ENCODE measurements at regions of chr15 and their contacts with region 1.

Region 1: GRCh38 chr15:100721770-100722550 is 119.6 kb downstream of the ASB7 start:
- DNase-seq: peak; percentile 99
- ATAC-seq: peak; percentile 69
- H3K4me3 ChIP-seq: peak overlapping the region; percentile 38; the same call in 1 of the 2 replicates
- H3K27ac ChIP-seq: peak overlapping the region; percentile 100
- H3K4me1 ChIP-seq: peaks cover 51% of the 10 kb centered on the region
- H3K27me3 ChIP-seq: no peaks in the 10 kb centered on the region
- CTCF ChIP-seq: no peak

Region 2: DNA sequence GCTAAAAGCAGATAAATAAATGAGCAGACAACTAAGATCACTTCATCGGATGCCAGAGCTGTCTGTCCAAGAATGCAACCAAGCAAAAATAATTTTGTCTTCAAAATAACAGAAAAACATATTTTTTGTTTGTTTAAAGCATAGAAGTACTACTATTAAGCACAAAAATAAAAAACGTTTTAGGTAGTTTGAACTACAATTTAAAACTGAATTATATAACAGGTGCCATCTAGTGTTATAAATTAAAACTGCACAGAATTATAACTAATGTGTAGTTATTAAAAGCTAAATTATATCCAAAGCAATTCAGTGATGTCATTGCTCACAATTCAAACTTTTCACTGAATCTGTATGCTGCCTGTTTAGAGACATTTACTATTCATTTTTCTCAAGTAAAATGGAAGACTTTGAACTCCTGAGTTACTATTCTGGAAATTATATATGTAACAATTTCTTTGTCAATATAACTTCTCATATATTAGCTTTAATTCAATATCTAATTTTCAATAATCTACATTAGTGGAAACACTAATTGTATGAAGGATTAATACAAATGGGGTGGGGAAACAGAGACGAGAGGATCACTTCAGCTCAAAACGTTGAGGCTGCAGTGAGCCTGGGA is 149.5 kb before region 1 on chr15:
- CTCF ChIA-PET with region 1: no interaction called
- POLR2A ChIA-PET with region 1: no interaction called
- intact Hi-C with region 1: no loop called
- DNase-seq: peak; percentile 58
- ATAC-seq: no peak
- H3K4me3 ChIP-seq: no peak overlapping the region
- H3K27ac ChIP-seq: no peak overlapping the region
- H3K4me1 ChIP-seq: no peaks in the 10 kb centered on the region
- H3K27me3 ChIP-seq: no peaks in the 10 kb centered on the region
- CTCF ChIP-seq: peak; percentile 66

Region 3: DNA sequence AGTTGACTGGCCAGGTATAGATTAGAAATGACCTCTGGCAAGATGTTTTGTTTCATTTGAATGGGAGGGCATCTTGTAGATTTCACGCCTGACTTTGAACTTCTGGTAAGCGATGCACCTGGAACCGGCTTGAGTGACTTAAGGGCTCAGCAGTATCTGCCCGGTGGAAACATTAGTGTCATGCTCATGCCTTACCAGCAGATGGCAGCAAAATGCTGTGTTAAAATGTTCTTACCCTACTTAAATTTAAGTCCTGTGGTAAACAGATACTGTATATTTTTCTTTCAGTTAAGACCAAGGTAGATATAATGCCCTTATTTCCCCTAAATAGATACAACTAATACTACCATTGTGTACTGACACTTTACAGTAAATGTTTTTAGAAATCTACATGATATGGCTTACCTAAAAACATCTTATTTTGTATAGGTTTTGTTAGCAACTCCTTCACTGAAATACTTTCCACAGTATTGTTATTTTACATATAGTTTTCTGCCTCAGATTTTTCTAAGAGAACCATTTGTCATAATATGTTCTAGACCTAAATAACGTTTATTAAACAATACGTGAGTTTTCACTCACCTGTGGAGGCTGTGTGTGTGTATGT is 94.1 kb before region 1 on chr15:
- CTCF ChIA-PET with region 1: no interaction called
- POLR2A ChIA-PET with region 1: interaction called, 6 read pairs
- intact Hi-C with region 1: loop called (anchors 5 kb)
- DNase-seq: peak; percentile 93
- ATAC-seq: peak; percentile 79
- H3K4me3 ChIP-seq: no peak overlapping the region
- H3K27ac ChIP-seq: peak overlapping the region; percentile 85
- H3K4me1 ChIP-seq: peaks cover 30% of the 10 kb centered on the region
- H3K27me3 ChIP-seq: no peaks in the 10 kb centered on the region
- CTCF ChIP-seq: peak; percentile 83

Region 4: GRCh38 chr15:100687582-100688141 is 34.3 kb before region 1 on chr15:
- CTCF ChIA-PET with region 1: no interaction called
- POLR2A ChIA-PET with region 1: no interaction called
- intact Hi-C with region 1: loop called (anchors 1 kb)
- DNase-seq: peak; percentile 95
- ATAC-seq: peak; percentile 82
- H3K4me3 ChIP-seq: peak overlapping the region; percentile 39; the same call in 1 of the 2 replicates
- H3K27ac ChIP-seq: peak overlapping the region; percentile 100
- H3K4me1 ChIP-seq: peaks cover 42% of the 10 kb centered on the region
- H3K27me3 ChIP-seq: no peaks in the 10 kb centered on the region
- CTCF ChIP-seq: no peak

Region 5: DNA sequence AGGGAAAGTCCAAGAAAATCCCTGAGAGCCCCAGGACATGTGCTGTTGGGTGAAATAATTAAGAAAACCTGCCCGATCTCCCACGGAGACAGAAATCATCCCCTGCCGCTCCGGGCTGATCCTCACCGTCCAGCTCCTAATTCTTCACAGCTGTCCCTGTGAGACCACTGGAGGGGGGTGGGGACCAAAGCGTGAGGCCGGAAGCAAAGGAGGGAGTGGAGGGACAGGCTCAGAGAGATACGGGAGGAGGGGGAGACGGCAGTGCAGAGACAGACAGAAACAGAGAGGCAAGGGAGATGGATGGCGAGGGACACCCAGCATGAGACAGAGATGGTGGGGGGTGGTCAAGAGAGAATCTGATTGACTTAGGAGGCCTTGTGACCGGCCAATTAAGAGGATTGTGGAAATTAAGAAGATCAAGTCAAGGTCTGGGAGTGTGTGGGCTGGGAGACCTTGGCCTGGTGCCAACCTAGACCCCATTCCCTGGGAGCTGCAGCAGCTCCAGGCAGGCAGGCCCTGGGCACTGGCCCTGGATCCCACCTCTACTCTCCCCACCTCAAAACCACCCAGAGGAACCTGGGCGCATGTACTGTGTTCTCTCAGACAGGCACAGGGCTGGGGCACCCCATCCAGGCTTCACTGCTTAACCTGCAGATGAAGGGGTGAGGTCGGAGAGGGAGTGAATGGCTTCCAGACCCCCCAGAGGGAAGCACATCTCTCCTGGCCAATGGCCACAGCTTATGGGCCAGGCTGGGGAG is 44.5 kb after region 1 on chr15:
- CTCF ChIA-PET with region 1: no interaction called
- POLR2A ChIA-PET with region 1: no interaction called
- intact Hi-C with region 1: no loop called
- DNase-seq: no peak
- ATAC-seq: no peak
- H3K4me3 ChIP-seq: no peak overlapping the region
- H3K27ac ChIP-seq: no peak overlapping the region
- H3K4me1 ChIP-seq: peaks cover 6% of the 10 kb centered on the region; the same call in 1 of the 2 replicates
- H3K27me3 ChIP-seq: no peaks in the 10 kb centered on the region
- CTCF ChIP-seq: no peak

Region 6: DNA sequence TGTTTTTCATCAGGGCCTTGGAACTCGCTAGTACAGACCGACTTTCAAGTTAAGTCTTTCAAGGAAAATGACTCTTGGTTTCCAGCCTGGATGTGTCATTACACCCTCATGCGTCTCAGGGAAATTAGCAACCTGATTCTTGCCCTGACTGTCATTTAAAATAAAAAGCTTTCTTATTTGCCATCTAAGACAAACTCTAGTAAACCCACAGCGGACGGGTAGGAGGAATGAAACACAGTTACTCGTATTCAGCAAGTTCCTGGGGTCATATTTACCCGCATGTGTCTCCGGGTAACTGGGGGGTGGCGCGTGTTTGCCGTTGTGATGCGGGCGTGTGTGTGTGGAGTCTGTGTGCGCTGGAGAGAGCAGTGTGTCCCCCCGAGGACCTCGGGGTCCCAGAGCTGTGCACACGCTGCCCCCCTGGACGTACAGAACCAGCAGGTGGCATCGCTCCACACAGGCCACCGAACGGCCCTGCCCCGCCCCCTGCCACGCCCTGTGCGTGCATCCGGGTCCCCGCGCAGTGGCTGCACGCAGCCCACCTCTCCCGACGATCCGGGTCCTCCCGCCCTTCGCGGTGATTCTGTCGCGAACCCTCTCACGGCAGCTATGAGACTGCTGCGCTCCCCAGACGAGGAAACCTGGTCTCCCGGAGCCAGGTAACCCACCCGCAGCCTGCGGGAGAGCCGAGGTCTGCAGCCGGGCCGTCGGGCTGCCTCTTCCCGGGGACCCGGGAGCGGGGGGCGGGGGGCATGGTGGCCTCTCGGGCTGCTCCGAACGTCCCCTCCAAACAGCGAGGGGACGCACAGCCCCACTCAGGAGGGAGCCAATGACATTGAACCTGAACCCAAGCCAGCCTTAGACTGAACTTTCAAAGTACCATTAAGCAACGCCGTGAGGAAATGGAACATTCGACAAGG is 127.6 kb after region 1 on chr15:
- CTCF ChIA-PET with region 1: no interaction called
- POLR2A ChIA-PET with region 1: interaction called, 14 read pairs
- intact Hi-C with region 1: loop called (anchors 1 kb)
- DNase-seq: peak; percentile 86
- ATAC-seq: peak; percentile 79
- H3K4me3 ChIP-seq: peak overlapping the region; percentile 77
- H3K27ac ChIP-seq: peak overlapping the region; percentile 98
- H3K4me1 ChIP-seq: peaks cover 42% of the 10 kb centered on the region
- H3K27me3 ChIP-seq: no peaks in the 10 kb centered on the region
- CTCF ChIP-seq: peak; percentile 68

Region 7: GRCh38 chr15:100879464-100880138 is 157.6 kb after region 1 on chr15 and contains the start of gene ALDH1A3:
- CTCF ChIA-PET with region 1: no interaction called
- POLR2A ChIA-PET with region 1: interaction called, 11 read pairs
- intact Hi-C with region 1: no loop called
- DNase-seq: peak; percentile 93
- ATAC-seq: peak; percentile 76
- H3K4me3 ChIP-seq: peak within 1 kb of the TSS; percentile 78
- H3K27ac ChIP-seq: peak within 1 kb of the TSS; percentile 95
- H3K4me1 ChIP-seq: peaks cover 32% of the 10 kb centered on the region
- H3K27me3 ChIP-seq: no peaks in the 10 kb centered on the region
- CTCF ChIP-seq: no peak
- total RNA-seq, gene ALDH1A3: 5,398 and 6,043 TPM in 2 replicates